GM13977 (cell line): ENCODE measurements at regions of chr10 and their contacts with region 1.

Region 1: DNA sequence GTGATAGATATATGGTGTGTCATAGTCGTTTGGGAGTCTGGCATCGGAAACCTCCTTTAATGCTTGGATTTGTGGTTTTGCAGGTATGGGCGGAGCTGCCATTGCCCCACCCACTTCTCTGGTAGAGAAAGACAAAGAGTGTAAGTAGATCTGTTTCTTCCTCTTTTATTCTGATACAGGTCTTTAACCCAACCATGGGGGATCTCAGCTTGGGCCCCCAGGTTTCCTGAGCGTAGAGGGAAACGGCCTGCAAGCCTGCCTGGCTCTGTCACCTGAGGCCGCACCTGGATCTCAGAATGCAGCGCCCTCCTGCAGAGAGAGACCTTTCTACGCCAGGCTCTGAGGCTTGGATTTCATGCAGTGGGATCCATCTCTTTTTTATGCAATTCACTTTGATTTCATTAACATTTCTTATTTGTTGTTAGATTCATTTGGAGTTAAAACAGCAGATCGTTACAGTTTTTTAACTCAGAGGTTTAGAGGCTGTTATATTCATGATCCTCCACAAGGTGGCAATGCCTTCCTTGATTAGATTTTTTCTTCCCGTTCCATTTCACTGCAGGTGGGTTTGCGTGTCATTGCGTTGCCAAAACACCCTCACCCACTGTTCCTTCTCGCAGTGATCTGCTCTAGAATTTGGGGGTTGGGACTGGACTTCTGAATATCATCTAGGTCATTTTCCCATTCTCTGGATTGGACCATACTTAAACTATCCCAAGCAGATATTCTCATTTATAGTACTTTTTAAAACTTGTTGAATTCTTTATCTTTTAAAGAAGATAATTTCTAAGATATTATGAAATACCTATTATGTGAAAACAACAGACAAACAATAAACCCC is 20.0 kb downstream of the RBM17 start:
- DNase-seq: peak; percentile 54
- CTCF ChIP-seq: peak; percentile 67

Region 2: DNA sequence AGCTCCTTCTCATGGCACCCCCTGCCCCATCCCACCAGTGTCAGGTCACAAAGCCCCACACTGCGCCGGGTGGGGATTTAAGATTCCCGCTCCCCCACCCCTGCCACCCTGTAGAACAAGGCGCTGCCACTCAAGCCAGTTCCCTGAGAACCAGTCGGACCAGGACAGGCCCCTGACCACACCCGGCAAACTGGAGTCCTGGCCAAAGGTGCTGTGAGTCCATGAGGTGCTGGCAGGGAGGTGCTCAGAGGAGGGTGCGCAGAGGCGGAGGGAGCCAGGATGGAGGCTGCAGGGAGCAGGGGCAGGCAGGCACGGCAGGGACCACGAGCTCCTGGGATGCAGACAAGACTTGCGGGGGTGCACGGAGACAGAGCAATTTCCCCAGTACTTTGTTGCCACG is 275.9 kb before region 1 on chr10:
- in situ Hi-C with region 1: no loop called
- DNase-seq: peak; percentile 2
- CTCF ChIP-seq: no peak

Region 3: GRCh38 chr10:5910323-5911100 is 198.3 kb before region 1 on chr10:
- in situ Hi-C with region 1: no loop called
- DNase-seq: no peak
- CTCF ChIP-seq: no peak

Region 4: GRCh38 chr10:6151087-6151977 is 42.5 kb after region 1 on chr10:
- in situ Hi-C with region 1: loop called (anchors 10 kb)
- DNase-seq: peak; percentile 85
- CTCF ChIP-seq: peak; percentile 80